Mucosa of descending colon (tissue), 3 donors: ENCODE measurements at regions of chr12 and their contacts with region 1.

Region 1: DNA sequence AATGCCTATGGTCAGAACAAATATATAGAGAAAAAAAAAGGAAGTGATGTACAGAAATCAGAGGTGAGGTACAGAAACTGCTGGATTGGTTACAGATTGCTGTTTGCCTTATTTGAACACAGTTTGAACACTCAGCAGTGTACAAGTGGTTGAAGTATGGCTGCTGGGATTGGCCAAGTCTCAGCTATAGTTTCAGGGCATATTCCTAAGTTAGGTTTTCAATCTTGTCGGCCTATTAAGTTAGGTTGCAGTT is 146.4 kb downstream of the LLPH start:
- DNase-seq: no peak
- ATAC-seq: no peak
- H3K4me3 ChIP-seq: no peak overlapping the region
- H3K4me1 ChIP-seq: no peaks in the 10 kb centered on the region
- CTCF ChIP-seq: no peak

Region 2: GRCh38 chr12:65823513-65824375 is 160.4 kb before region 1 on chr12:
- intact Hi-C with region 1: loop called in 1 of 2 experiments (anchors 5 kb)
- DNase-seq: peak; percentile 73 to 83 (median 76)
- ATAC-seq: peak; percentile 76
- H3K4me3 ChIP-seq: peak overlapping the region; percentile 59
- H3K4me1 ChIP-seq: peaks cover 11% of the 10 kb centered on the region
- CTCF ChIP-seq: no peak